MCF 10A (cell line): ENCODE measurements at regions of chr11 and their contacts with region 1.

Region 1: GRCh38 chr11:16738193-16738946 is at the start of gene C11orf58:
- DNase-seq: peak; percentile 98
- H3K4me3 Mint-ChIP-seq: no peak within 1 kb of the TSS
- H3K27ac Mint-ChIP-seq: no peak within 1 kb of the TSS
- H3K4me1 Mint-ChIP-seq: peaks cover 25% of the 10 kb centered on the region
- H3K27me3 Mint-ChIP-seq: no peaks in the 10 kb centered on the region
- CTCF ChIP-seq: no peak
- total RNA-seq, gene C11orf58: 230 and 249 TPM in 2 replicates

Region 2: GRCh38 chr11:16632295-16633200 is 105.8 kb before region 1 on chr11:
- CTCF ChIA-PET with region 1: interaction called, 3 read pairs
- POLR2A ChIA-PET with region 1: interaction called, 9 read pairs
- intact Hi-C with region 1: loop called (anchors 1 kb)
- DNase-seq: peak; percentile 47
- H3K4me3 Mint-ChIP-seq: peak overlapping the region; percentile 26
- H3K27ac Mint-ChIP-seq: no peak overlapping the region
- H3K4me1 Mint-ChIP-seq: no peaks in the 10 kb centered on the region
- H3K27me3 Mint-ChIP-seq: peaks cover 13% of the 10 kb centered on the region
- CTCF ChIP-seq: peak; percentile 54

Region 3: DNA sequence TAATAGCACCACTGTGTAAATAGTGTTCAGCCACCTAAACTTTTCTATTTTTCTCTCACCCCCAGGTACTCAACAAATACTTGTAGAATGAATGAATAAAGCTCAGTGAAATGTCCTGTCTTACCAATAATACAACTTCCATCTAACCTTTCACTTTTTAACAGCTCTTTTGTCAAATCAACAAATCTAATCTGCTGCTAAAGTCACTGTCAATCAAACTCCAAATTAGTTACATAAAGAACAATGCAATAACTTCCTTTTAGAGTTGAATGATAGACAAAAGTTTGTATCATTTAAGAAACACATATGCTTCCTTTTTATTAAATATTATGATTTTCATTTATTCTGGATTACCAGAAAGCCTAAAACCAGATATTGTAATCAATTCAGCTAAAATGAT is 34.6 kb before region 1 on chr11:
- CTCF ChIA-PET with region 1: no interaction called
- POLR2A ChIA-PET with region 1: interaction called, 11 read pairs
- intact Hi-C with region 1: no loop called
- DNase-seq: no peak
- H3K4me3 Mint-ChIP-seq: no peak overlapping the region
- H3K27ac Mint-ChIP-seq: no peak overlapping the region
- H3K4me1 Mint-ChIP-seq: no peaks in the 10 kb centered on the region
- H3K27me3 Mint-ChIP-seq: peaks cover 11% of the 10 kb centered on the region
- CTCF ChIP-seq: no peak

Region 4: GRCh38 chr11:16749666-16750065 is 11.3 kb after region 1 on chr11:
- CTCF ChIA-PET with region 1: interaction called, 3 read pairs
- POLR2A ChIA-PET with region 1: interaction called, 26 read pairs
- intact Hi-C with region 1: no loop called
- DNase-seq: no peak
- H3K4me3 Mint-ChIP-seq: no peak overlapping the region
- H3K27ac Mint-ChIP-seq: no peak overlapping the region
- H3K4me1 Mint-ChIP-seq: peaks cover 9% of the 10 kb centered on the region
- H3K27me3 Mint-ChIP-seq: no peaks in the 10 kb centered on the region
- CTCF ChIP-seq: no peak